ENCODE measurements at regions of chr4 and their contacts with region 1.

Region 1: GRCh38 chr4:153127760-153128494 is 76.3 kb upstream of the TRIM2 start:
- DNase-seq: peak; percentile 77 to 86
- H3K4me3 ChIP-seq: no peak overlapping the region
- H3K4me3 Mint-ChIP-seq: peak overlapping the region; percentile 49
- H3K27ac Mint-ChIP-seq: no peak overlapping the region
- H3K4me1 ChIP-seq: peaks cover 15% of the 10 kb centered on the region
- H3K4me1 Mint-ChIP-seq: peaks cover 7% of the 10 kb centered on the region
- H3K27me3 ChIP-seq: no peaks in the 10 kb centered on the region
- H3K27me3 Mint-ChIP-seq: no peaks in the 10 kb centered on the region
- CTCF ChIP-seq: peak; percentile 74 to 82

Region 2: GRCh38 chr4:152779513-152780266 is 348.2 kb before region 1 on chr4 and contains the starts of genes ARFIP1 and TIGD4:
- CTCF ChIA-PET with region 1: no interaction called
- POLR2A ChIA-PET with region 1: no interaction called
- intact Hi-C with region 1: loop called (anchors 1 kb)
- DNase-seq: peak; percentile 97 to 98
- H3K4me3 ChIP-seq: peak within 1 kb of the TSS; percentile 86
- H3K4me3 Mint-ChIP-seq: peak within 1 kb of the TSS; percentile 93
- H3K27ac Mint-ChIP-seq: peak within 1 kb of the TSS; percentile 94
- H3K4me1 ChIP-seq: peaks cover 5% of the 10 kb centered on the region; the same call in 1 of the 2 replicates
- H3K4me1 Mint-ChIP-seq: no peaks in the 10 kb centered on the region
- H3K27me3 ChIP-seq: no peaks in the 10 kb centered on the region
- H3K27me3 Mint-ChIP-seq: no peaks in the 10 kb centered on the region
- CTCF ChIP-seq: no peak
- total RNA-seq, gene ARFIP1: 26.9 and 31.9 TPM in 2 replicates
- total RNA-seq, gene TIGD4: 0.95 and 1.0 TPM in 2 replicates

Region 3: DNA sequence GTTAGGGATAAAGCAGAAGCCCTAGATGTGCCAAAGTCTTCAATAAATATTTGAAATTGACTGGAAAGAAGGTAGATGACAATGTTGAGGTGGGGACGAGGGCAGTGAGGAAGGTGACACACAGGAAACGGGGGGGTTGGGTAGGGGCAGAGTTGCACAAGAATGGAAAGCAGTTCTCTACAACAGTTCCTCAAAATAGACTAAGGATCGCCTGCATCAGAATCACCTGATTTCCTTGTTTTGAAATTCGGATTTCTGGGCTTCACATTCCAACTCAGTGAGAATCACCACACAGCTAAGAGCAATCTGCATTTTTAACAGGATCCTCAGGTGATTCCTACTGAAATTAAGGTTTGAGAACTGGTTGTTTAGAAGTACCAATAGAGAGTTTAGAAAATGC is 277.6 kb before region 1 on chr4:
- CTCF ChIA-PET with region 1: interaction called, 4 read pairs
- POLR2A ChIA-PET with region 1: no interaction called
- intact Hi-C with region 1: loop called (anchors 1 kb)
- DNase-seq: no peak
- H3K4me3 ChIP-seq: no peak overlapping the region
- H3K4me3 Mint-ChIP-seq: no peak overlapping the region
- H3K27ac Mint-ChIP-seq: no peak overlapping the region
- H3K4me1 ChIP-seq: no peaks in the 10 kb centered on the region
- H3K4me1 Mint-ChIP-seq: no peaks in the 10 kb centered on the region
- H3K27me3 ChIP-seq: no peaks in the 10 kb centered on the region
- H3K27me3 Mint-ChIP-seq: no peaks in the 10 kb centered on the region
- CTCF ChIP-seq: no peak

Region 4: GRCh38 chr4:153204247-153205027 is 76.5 kb after region 1 on chr4 and contains the start of gene TRIM2:
- CTCF ChIA-PET with region 1: no interaction called
- POLR2A ChIA-PET with region 1: no interaction called
- intact Hi-C with region 1: no loop called
- DNase-seq: peak; percentile 85 to 91
- H3K4me3 ChIP-seq: peak within 1 kb of the TSS; percentile 73
- H3K4me3 Mint-ChIP-seq: peak within 1 kb of the TSS; percentile 96
- H3K27ac Mint-ChIP-seq: peak within 1 kb of the TSS; percentile 87
- H3K4me1 ChIP-seq: peaks cover 44% of the 10 kb centered on the region
- H3K4me1 Mint-ChIP-seq: peaks cover 21% of the 10 kb centered on the region
- H3K27me3 ChIP-seq: no peaks in the 10 kb centered on the region
- H3K27me3 Mint-ChIP-seq: no peaks in the 10 kb centered on the region
- CTCF ChIP-seq: no peak
- total RNA-seq, gene TRIM2: 62.0 and 62.3 TPM in 2 replicates

Region 5: GRCh38 chr4:153409412-153409811 is 281.5 kb after region 1 on chr4:
- CTCF ChIA-PET with region 1: no interaction called
- POLR2A ChIA-PET with region 1: no interaction called
- intact Hi-C with region 1: no loop called
- DNase-seq: no peak
- H3K4me3 ChIP-seq: no peak overlapping the region
- H3K4me3 Mint-ChIP-seq: no peak overlapping the region
- H3K27ac Mint-ChIP-seq: no peak overlapping the region
- H3K4me1 ChIP-seq: no peaks in the 10 kb centered on the region
- H3K4me1 Mint-ChIP-seq: no peaks in the 10 kb centered on the region
- H3K27me3 ChIP-seq: no peaks in the 10 kb centered on the region
- H3K27me3 Mint-ChIP-seq: no peaks in the 10 kb centered on the region
- CTCF ChIP-seq: no peak